ENCODE measurements at regions of chr16 and their contacts with region 1.

Region 1: DNA sequence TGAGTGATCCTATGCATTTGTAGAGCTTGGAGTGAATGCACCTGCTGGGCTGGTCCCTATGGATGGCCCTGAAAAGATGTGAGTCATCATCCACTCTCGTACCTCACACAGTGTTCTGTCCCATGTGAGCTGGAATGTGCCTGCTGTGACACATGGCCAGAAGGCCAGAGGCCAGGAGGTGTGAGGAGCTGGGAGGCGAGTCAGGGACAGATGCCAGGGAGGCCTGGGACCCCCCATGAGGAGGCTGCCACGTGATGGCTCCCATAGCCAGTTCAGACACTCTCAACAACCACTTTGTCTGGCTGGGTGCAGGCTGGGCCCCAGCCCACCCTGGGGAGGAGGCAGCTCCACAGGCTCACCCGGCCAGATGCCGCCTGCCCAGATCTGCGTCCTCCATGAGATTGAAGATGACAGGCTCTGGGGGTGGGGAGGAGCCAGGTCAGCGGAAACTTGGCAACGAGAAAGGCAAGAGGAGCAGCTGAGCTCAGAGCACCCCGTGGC is 168.8 kb downstream of the C16orf78 start:
- DNase-seq: peak; percentile 74 to 93
- ATAC-seq: peak; percentile 88 to 94 (median 88)
- H3K4me3 ChIP-seq: peak overlapping the region; percentile 28
- H3K27ac ChIP-seq: peak overlapping the region; percentile 70
- H3K4me1 ChIP-seq: peaks cover 42% of the 10 kb centered on the region
- H3K27me3 ChIP-seq: no peaks in the 10 kb centered on the region
- CTCF ChIP-seq: no peak

Region 2: GRCh38 chr16:49575391-49575790 is 33.0 kb after region 1 on chr16:
- intact Hi-C with region 1: loop called in 1 of 2 experiments (anchors 5 kb)
- DNase-seq: no peak
- ATAC-seq: peak; percentile 36 to 67 (median 56)
- H3K4me3 ChIP-seq: no peak overlapping the region
- H3K27ac ChIP-seq: peak overlapping the region; percentile 16
- H3K4me1 ChIP-seq: peaks cover 15% of the 10 kb centered on the region
- H3K27me3 ChIP-seq: no peaks in the 10 kb centered on the region
- CTCF ChIP-seq: no peak